H1 (cell line): ENCODE measurements at regions of chr19 and their contacts with region 1.

Region 1: DNA sequence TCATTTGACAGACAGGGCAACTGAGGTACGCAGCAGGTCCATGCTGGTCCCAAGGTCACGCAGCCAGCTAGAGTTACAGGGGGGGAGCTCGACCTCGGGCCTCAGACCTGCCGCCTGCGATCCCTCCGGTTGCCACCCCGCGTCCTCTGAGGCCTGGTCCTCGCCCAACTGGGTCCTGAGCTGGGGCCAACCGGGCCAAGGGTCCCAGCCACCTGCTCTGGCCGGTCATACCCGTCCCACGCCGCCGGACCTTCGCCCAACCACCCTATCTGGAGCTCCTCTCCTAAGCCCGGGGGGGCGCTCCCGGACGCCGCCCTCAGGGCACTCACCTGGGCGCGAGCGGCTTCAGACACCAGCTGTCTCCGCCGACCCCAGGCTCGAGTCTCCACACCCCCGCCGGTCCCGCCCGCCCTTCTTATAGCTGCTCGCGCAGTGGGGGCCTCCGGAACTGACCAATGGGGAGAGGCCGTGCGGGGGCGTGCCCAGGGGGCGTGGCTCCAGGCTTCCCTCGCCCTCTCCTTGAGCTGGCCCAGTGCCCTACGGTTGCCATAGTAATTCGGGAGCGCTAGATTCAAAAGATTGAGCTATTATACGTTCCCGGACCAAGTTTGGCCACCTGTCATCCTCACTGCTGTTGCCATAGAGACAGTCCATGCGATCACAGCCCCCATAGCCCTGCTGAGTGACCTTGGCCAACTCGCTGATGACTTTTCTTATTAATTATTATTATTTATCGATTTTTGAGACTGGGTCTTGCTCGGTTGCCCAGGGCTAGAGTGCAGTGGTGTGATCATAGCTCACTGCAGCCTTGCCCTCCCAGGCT is at the start of gene PLIN5:
- DNase-seq: peak; percentile 54 to 99
- H3K4me3 ChIP-seq: peak within 1 kb of the TSS in 3 of 4 experiments; percentile 12 to 53 (median 16); a peak in 5 of 8 replicates
- H3K27ac ChIP-seq: no peak within 1 kb of the TSS
- H3K4me1 ChIP-seq: peaks cover 0 to 13% (median 5%) of the 10 kb centered on the region in 4 experiments; a peak in 5 of 7 replicates
- H3K27me3 ChIP-seq: peaks cover 0 to 19% (median 15%) of the 10 kb centered on the region in 4 experiments; a peak in 4 of 7 replicates
- CTCF ChIP-seq: peak in 2 of 3 experiments; percentile 0 to 8; a peak in 2 of 4 replicates
- EP300 ChIP-seq: no peak
- POLR2A ChIP-seq: peak in 1 of 2 experiments; percentile 86; a peak in 2 of 3 replicates
- RAD21 ChIP-seq: peak in 1 of 2 experiments; percentile 3; a peak in 1 of 4 replicates
- total RNA-seq, gene PLIN5: 1.8 and 2.0 TPM in 2 replicates

Region 2: GRCh38 chr19:4400135-4400936 is 134.7 kb before region 1 on chr19 and contains the start of gene SH3GL1:
- CTCF ChIA-PET with region 1: no interaction called
- POLR2A ChIA-PET with region 1: no interaction called
- DNase-seq: peak; percentile 83 to 95
- H3K4me3 ChIP-seq: peak within 1 kb of the TSS; percentile 58 to 93 (median 82)
- H3K27ac ChIP-seq: peak within 1 kb of the TSS; percentile 40; the same call in 1 of the 2 replicates
- H3K4me1 ChIP-seq: peaks cover 0 to 9% (median 4%) of the 10 kb centered on the region in 4 experiments; a peak in 4 of 7 replicates
- H3K27me3 ChIP-seq: no peaks in the 10 kb centered on the region
- CTCF ChIP-seq: peak; percentile 92 to 99 (median 96)
- EP300 ChIP-seq: peak in 1 of 2 experiments; percentile 57; a peak in 1 of 3 replicates
- POLR2A ChIP-seq: no peak; a peak in 1 of 3 replicates
- RAD21 ChIP-seq: peak; percentile 32 to 62; a peak in 3 of 4 replicates
- total RNA-seq, gene SH3GL1: 102 TPM in 2 replicates

Region 3: DNA sequence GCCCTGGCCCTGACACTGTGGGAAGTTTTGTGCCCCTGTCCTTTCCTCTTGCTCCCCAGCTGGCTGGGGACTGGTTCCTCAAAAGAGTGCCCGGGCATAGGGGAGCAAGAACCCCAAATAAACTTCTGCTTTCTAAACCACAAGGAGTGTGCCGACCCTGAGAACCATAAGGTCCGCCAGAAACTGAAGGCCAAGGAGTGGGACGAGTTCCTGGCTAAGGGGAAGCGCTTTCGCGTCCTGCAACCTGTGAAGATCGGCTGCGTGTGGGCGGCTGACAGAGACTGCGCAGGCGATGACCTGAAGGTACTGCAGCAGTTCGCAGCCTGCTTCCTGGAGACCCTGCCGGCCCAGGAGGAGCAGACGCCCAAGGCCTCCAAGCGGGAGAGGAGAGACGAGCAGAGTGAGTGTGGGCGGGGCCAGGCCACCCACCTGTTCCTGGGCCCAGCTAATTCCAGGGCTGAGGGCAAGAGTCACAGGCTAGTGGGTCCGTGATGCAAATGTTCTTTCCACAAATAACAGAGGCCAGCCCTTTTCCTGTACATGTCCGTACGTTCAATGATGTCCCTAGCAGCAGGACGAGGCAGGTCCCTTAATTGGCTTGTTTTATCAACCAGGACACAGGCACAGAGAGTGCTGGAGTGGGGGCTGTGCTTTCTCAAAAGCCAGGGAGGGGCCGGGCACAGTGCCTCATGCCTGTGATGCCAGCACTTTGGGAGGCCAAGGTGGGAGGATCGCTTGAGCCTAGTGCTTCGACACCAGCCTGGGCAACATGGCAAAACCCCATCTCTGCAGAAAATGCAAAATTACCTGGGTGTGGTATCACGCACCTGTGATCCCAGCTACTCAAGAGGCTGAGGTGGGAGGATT is 103.0 kb before region 1 on chr19:
- CTCF ChIA-PET with region 1: no interaction called
- POLR2A ChIA-PET with region 1: no interaction called
- DNase-seq: no peak
- H3K4me3 ChIP-seq: no peak overlapping the region
- H3K27ac ChIP-seq: no peak overlapping the region
- H3K4me1 ChIP-seq: no peaks in the 10 kb centered on the region
- H3K27me3 ChIP-seq: no peaks in the 10 kb centered on the region
- CTCF ChIP-seq: no peak
- EP300 ChIP-seq: no peak
- POLR2A ChIP-seq: peak in 1 of 2 experiments; percentile 38; a peak in 1 of 3 replicates
- RAD21 ChIP-seq: no peak

Region 4: GRCh38 chr19:4482721-4483364 is 52.2 kb before region 1 on chr19:
- CTCF ChIA-PET with region 1: no interaction called
- POLR2A ChIA-PET with region 1: no interaction called
- DNase-seq: no peak
- H3K4me3 ChIP-seq: no peak overlapping the region
- H3K27ac ChIP-seq: no peak overlapping the region
- H3K4me1 ChIP-seq: no peaks in the 10 kb centered on the region
- H3K27me3 ChIP-seq: no peaks in the 10 kb centered on the region
- CTCF ChIP-seq: no peak
- EP300 ChIP-seq: no peak
- POLR2A ChIP-seq: no peak
- RAD21 ChIP-seq: no peak

Region 5: GRCh38 chr19:4518345-4519171 is 16.5 kb before region 1 on chr19 and contains the start of gene PLIN4:
- CTCF ChIA-PET with region 1: interaction called, 174 read pairs
- POLR2A ChIA-PET with region 1: interaction called, 11 read pairs
- DNase-seq: peak in 1 of 2 experiments; percentile 54
- H3K4me3 ChIP-seq: no peak within 1 kb of the TSS
- H3K27ac ChIP-seq: no peak within 1 kb of the TSS
- H3K4me1 ChIP-seq: peaks cover 0 to 3% (median under 1%) of the 10 kb centered on the region in 4 experiments; a peak in 4 of 7 replicates
- H3K27me3 ChIP-seq: peaks cover 0 to 28% (median 20%) of the 10 kb centered on the region in 4 experiments; a peak in 5 of 7 replicates
- CTCF ChIP-seq: no peak
- EP300 ChIP-seq: no peak
- POLR2A ChIP-seq: no peak
- RAD21 ChIP-seq: no peak
- total RNA-seq, gene PLIN4: 0.45 and 0.54 TPM in 2 replicates

Region 6: GRCh38 chr19:4547303-4548237 is 12.5 kb after region 1 on chr19:
- CTCF ChIA-PET with region 1: interaction called, 10 read pairs
- POLR2A ChIA-PET with region 1: interaction called, 4 read pairs
- DNase-seq: no peak
- H3K4me3 ChIP-seq: no peak overlapping the region
- H3K27ac ChIP-seq: no peak overlapping the region
- H3K4me1 ChIP-seq: no peaks in the 10 kb centered on the region; a peak in 1 of 7 replicates
- H3K27me3 ChIP-seq: no peaks in the 10 kb centered on the region
- CTCF ChIP-seq: peak; percentile 42 to 79 (median 65)
- EP300 ChIP-seq: no peak
- POLR2A ChIP-seq: no peak
- RAD21 ChIP-seq: peak; percentile 9 to 22; a peak in 1 of 4 replicates